CD8-positive, alpha-beta memory T cell (primary cell): ENCODE measurements at regions of chr16 and their contacts with region 1.

Region 1: DNA sequence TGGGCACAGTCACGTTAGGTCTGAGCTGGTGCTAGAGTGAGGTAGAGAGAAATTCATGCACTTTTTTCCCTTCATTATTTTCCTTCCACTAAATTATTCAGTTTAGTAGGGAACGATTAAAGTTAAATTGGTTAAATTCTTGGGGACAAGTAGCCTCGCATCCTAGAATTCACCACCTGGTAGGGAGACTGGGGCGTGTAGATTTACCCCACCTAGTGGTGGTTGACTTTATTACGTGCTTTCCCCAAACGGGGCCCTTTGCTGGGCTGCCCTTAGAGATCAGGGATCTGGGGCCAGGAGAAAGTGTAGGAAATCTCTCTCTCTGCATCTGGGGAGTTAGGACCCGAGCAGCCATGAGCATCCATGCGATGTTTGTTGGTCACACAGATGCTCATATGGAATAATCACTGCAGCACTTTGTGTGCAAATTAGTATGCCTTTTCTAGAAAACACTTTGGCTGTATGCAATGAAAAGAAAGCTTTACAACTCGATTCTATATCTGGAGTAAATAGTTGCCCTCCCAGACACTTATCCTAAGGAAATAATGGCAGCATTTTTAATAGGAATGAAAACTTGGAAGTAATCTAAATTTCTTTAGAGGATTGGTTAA is 107.0 kb downstream of the PLCG2 start:
- DNase-seq: peak in 1 of 5 donors; percentile 13
- H3K4me3 ChIP-seq: no peak overlapping the region
- H3K4me3 Mint-ChIP-seq: no peak overlapping the region
- H3K27ac ChIP-seq: no peak overlapping the region
- H3K27ac Mint-ChIP-seq: peak overlapping the region in 1 of 8 donors; percentile 33
- H3K4me1 ChIP-seq: no peaks in the 10 kb centered on the region
- H3K4me1 Mint-ChIP-seq: no peaks in the 10 kb centered on the region
- H3K27me3 ChIP-seq: no peaks in the 10 kb centered on the region
- H3K27me3 Mint-ChIP-seq: no peaks in the 10 kb centered on the region

Region 2: GRCh38 chr16:81778861-81779535 is 107.1 kb before region 1 on chr16 and contains the start of gene PLCG2:
- CTCF ChIA-PET with region 1: interaction called, 13 read pairs
- POLR2A ChIA-PET with region 1: no interaction called
- DNase-seq: peak; percentile 31 to 81 (median 70)
- H3K4me3 ChIP-seq: peak within 1 kb of the TSS; percentile 58
- H3K4me3 Mint-ChIP-seq: peak within 1 kb of the TSS; percentile 86 to 94 (median 91)
- H3K27ac ChIP-seq: no peak within 1 kb of the TSS
- H3K27ac Mint-ChIP-seq: peak within 1 kb of the TSS in 7 of 8 donors; percentile 58 to 87 (median 70)
- H3K4me1 ChIP-seq: peaks cover 4% of the 10 kb centered on the region
- H3K4me1 Mint-ChIP-seq: peaks cover 13 to 34% (median 23%) of the 10 kb centered on the region in 3 donors
- H3K27me3 ChIP-seq: no peaks in the 10 kb centered on the region
- H3K27me3 Mint-ChIP-seq: peaks cover 6 to 8% of the 10 kb centered on the region in 2 donors
- total RNA-seq, gene PLCG2: 14.2 to 16.2 TPM